ENCODE measurements at regions of chr10 and their contacts with region 1.

Region 1: GRCh38 chr10:72248468-72249151 is 25.1 kb upstream of the DDIT4 start:
- DNase-seq: peak; percentile 85 to 90 (median 87)
- H3K4me3 ChIP-seq: peak overlapping the region; percentile 31 to 33
- H3K4me3 Mint-ChIP-seq: peak overlapping the region; percentile 83 to 92 (median 86)
- H3K27ac ChIP-seq: peak overlapping the region; percentile 55
- H3K27ac Mint-ChIP-seq: peak overlapping the region; percentile 95 to 98 (median 96)
- H3K4me1 ChIP-seq: peaks cover 96% of the 10 kb centered on the region
- H3K4me1 Mint-ChIP-seq: peaks cover 58 to 91% (median 77%) of the 10 kb centered on the region in 4 donors
- H3K27me3 ChIP-seq: no peaks in the 10 kb centered on the region
- H3K27me3 Mint-ChIP-seq: no peaks in the 10 kb centered on the region

Region 2: DNA sequence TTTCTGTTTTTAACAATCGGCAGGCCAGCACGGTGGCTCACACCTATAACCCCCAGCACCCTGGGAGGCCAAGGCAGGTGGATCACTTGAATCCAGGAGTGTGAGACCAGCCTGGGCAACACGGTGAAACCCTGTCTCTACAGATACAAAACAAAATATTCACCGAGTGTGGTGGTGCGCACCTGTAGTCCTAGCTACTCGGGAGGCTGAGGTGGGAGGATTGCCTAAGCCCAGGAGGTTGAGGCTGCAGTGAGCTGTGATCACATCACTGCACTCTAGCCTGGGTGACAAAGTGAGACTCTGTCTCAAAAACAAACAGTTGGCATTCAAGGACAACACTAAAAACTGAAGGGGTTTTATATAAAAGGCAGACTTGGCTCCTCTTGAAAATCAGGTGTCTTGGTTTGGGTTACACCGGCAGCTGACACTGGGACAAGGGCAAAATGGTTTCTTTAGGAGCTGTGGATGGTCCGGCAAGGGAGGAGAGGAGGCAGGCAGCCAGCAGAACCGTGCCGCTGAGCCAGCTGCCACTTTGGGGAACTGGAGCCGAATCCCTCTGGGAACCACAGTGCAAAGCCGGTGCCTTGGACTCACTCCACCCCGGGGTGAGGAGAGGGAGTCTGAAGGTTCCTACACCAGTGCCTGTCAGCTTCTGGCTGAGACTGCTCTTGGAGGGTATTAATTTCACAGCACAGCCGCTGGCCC is 231.8 kb before region 1 on chr10:
- CTCF ChIA-PET with region 1: no interaction called
- POLR2A ChIA-PET with region 1: no interaction called
- intact Hi-C with region 1: no loop called
- DNase-seq: no peak
- H3K4me3 ChIP-seq: no peak overlapping the region
- H3K4me3 Mint-ChIP-seq: no peak overlapping the region
- H3K27ac ChIP-seq: no peak overlapping the region
- H3K27ac Mint-ChIP-seq: no peak overlapping the region
- H3K4me1 ChIP-seq: no peaks in the 10 kb centered on the region
- H3K4me1 Mint-ChIP-seq: peaks cover 0 to 5% (median 2%) of the 10 kb centered on the region in 4 donors
- H3K27me3 ChIP-seq: no peaks in the 10 kb centered on the region
- H3K27me3 Mint-ChIP-seq: peaks cover 0 to 11% of the 10 kb centered on the region in 2 donors

Region 3: DNA sequence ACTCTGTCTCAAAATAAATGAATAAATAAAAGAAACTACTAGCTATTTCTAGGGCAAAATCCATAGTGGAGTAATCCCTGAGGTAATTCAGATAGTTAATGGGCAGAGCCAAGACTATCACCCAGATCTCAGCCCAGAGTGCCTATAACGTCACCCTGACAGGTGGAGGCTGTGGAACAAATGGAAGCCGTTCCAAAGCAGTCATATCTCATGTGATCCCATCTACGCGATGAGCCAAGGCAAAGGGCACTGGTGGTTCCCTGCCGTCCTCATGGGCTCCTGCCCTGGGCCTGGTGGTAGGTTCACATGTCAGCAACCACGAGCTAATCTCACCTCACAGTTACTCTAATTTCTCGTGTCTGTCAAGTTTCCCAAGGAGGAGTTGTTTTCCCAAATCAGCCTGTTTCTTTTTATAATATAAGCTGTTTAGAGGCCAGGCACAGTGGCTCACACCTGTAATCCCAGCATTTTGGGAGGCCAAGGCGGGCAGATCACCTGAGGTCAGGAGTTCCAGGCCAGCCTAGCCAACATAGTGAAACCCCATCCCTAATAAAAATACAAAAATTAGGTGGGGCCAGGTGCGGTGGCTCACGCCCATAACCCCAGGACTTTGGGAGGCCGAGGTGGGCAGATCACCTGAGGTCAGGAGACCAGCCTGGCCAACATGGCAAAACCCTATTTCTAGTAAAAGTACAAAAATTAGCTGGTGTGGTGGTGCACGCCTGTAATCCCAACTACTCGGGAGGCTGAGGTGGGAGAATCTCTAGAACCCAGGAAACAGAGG is 10.0 kb before region 1 on chr10:
- CTCF ChIA-PET with region 1: no interaction called
- POLR2A ChIA-PET with region 1: interaction called, 13 read pairs
- intact Hi-C with region 1: no loop called
- DNase-seq: no peak
- H3K4me3 ChIP-seq: no peak overlapping the region
- H3K4me3 Mint-ChIP-seq: no peak overlapping the region
- H3K27ac ChIP-seq: no peak overlapping the region
- H3K27ac Mint-ChIP-seq: peak overlapping the region in 3 of 7 donors; percentile 53 to 64 (median 56)
- H3K4me1 ChIP-seq: peaks cover 12% of the 10 kb centered on the region
- H3K4me1 Mint-ChIP-seq: peaks cover 19 to 36% (median 29%) of the 10 kb centered on the region in 4 donors
- H3K27me3 ChIP-seq: no peaks in the 10 kb centered on the region
- H3K27me3 Mint-ChIP-seq: no peaks in the 10 kb centered on the region

Region 4: DNA sequence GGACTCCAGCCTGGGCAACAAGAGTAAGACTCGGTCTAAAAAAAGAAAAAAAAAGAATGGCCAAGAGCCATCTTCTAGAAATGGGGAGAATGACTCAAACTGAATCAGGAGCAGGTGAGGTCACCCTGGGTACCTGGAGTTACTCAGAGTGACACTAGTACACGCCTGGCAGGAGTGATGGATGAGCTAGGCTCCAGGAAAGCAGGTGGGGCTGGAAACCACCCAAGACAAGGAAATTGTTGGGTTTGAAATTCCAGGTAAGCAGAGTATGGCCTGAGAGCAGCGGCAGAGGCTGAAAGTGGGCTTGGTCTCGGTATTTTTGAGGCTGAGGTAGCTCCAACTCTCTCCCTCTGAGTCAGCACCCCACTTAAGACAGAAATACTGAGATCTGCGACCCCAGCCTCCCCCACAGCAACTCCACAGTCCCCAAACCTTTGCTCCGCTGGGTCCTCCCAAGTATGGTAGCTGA is 43.6 kb after region 1 on chr10:
- CTCF ChIA-PET with region 1: no interaction called
- POLR2A ChIA-PET with region 1: interaction called, 25 read pairs
- intact Hi-C with region 1: loop called (anchors 1 kb)
- DNase-seq: peak in 2 of 5 donors; percentile 9 to 57
- H3K4me3 ChIP-seq: no peak overlapping the region
- H3K4me3 Mint-ChIP-seq: peak overlapping the region in 6 of 8 donors; percentile 7 to 70 (median 34)
- H3K27ac ChIP-seq: no peak overlapping the region
- H3K27ac Mint-ChIP-seq: peak overlapping the region; percentile 75 to 99 (median 88)
- H3K4me1 ChIP-seq: peaks cover 66% of the 10 kb centered on the region
- H3K4me1 Mint-ChIP-seq: peaks cover 41 to 67% (median 57%) of the 10 kb centered on the region in 4 donors
- H3K27me3 ChIP-seq: no peaks in the 10 kb centered on the region
- H3K27me3 Mint-ChIP-seq: no peaks in the 10 kb centered on the region

Region 5: GRCh38 chr10:72297968-72298773 is 49.6 kb after region 1 on chr10:
- CTCF ChIA-PET with region 1: no interaction called
- POLR2A ChIA-PET with region 1: interaction called, 25 read pairs
- intact Hi-C with region 1: loop called (anchors 1 kb)
- DNase-seq: peak; percentile 89 to 95 (median 91)
- H3K4me3 ChIP-seq: peak overlapping the region in 1 of 2 donors; percentile 71
- H3K4me3 Mint-ChIP-seq: peak overlapping the region; percentile 29 to 94 (median 86)
- H3K27ac ChIP-seq: peak overlapping the region; percentile 95
- H3K27ac Mint-ChIP-seq: peak overlapping the region; percentile 96 to 100 (median 100)
- H3K4me1 ChIP-seq: peaks cover 56% of the 10 kb centered on the region
- H3K4me1 Mint-ChIP-seq: peaks cover 26 to 67% (median 46%) of the 10 kb centered on the region in 4 donors
- H3K27me3 ChIP-seq: no peaks in the 10 kb centered on the region
- H3K27me3 Mint-ChIP-seq: no peaks in the 10 kb centered on the region

Region 6: DNA sequence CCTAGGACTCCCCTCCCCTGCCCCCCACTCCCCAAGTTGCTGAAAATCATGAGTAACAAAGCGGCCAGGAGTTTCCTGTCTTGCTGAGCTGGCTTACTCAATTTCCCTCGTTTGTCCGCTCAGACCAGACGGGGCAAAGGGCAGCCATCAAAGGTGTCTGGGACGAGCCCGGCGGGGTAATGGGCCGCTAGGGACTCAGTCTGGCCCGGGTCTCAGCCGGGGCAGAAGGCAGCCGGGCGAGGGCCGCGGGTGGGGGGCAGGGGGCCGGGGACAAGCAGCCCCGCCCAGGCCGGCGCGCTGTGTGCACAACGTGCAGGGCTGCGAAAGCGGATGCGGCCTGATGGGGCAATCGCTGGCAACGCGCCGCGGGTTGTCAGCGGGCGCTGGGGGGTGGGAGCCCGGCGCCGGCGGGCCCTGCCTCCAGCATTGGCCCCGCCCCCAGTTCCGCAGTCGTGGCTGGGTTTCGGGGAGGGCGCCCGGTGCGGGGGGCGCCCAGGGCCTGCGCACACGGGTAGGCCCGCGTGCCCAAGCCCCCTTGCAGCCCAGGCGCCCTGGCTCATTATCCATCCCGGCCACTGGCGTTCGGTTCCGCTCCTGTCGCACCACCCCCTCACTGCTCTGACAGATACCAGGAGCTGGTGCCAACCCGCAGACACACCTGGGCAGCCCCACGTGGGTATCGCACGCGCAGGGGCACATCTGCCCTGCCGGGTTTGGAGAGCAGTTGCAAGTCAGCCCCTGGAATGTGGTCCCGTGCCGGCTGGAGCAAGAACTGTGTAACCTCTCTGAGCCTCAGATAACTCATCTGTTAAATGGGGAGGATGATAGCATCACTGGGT is 71.0 kb after region 1 on chr10:
- CTCF ChIA-PET with region 1: interaction called, 4 read pairs
- POLR2A ChIA-PET with region 1: interaction called, 29 read pairs
- intact Hi-C with region 1: loop called (anchors 2 kb)
- DNase-seq: peak; percentile 87 to 91 (median 89)
- H3K4me3 ChIP-seq: peak overlapping the region; percentile 46 to 55
- H3K4me3 Mint-ChIP-seq: peak overlapping the region; percentile 79 to 89 (median 84)
- H3K27ac ChIP-seq: peak overlapping the region; percentile 89
- H3K27ac Mint-ChIP-seq: peak overlapping the region; percentile 96 to 99 (median 99)
- H3K4me1 ChIP-seq: peaks cover 95% of the 10 kb centered on the region
- H3K4me1 Mint-ChIP-seq: peaks cover 53 to 92% (median 74%) of the 10 kb centered on the region in 4 donors
- H3K27me3 ChIP-seq: no peaks in the 10 kb centered on the region
- H3K27me3 Mint-ChIP-seq: no peaks in the 10 kb centered on the region